ENCODE measurements at regions of chr18 and their contacts with region 1.

Region 1: GRCh38 chr18:61581578-61582201 is 248.5 kb downstream of the CDH20 start:
- DNase-seq: peak; percentile 88
- H3K4me3 ChIP-seq: peak overlapping the region; percentile 35 to 47; a peak in 3 of 4 replicates
- H3K27ac ChIP-seq: no peak overlapping the region
- H3K4me1 ChIP-seq: peaks cover 0 to 4% of the 10 kb centered on the region in 2 experiments; a peak in 2 of 4 replicates
- H3K27me3 ChIP-seq: no peaks in the 10 kb centered on the region
- CTCF ChIP-seq: peak; percentile 97
- EP300 ChIP-seq: no peak
- RAD21 ChIP-seq: peak; percentile 82

Region 2: GRCh38 chr18:61551586-61551985 is 30.1 kb before region 1 on chr18:
- CTCF ChIA-PET with region 1: interaction called, 14 read pairs
- POLR2A ChIA-PET with region 1: no interaction called
- DNase-seq: peak; percentile 74
- H3K4me3 ChIP-seq: no peak overlapping the region
- H3K27ac ChIP-seq: 0 out of 4 replicates have a peak overlapping the region, but pooled peaks of 1 of the 2 experiments have one; percentile 11
- H3K4me1 ChIP-seq: no peaks in the 10 kb centered on the region; a peak in 1 of 4 replicates
- H3K27me3 ChIP-seq: no peaks in the 10 kb centered on the region
- CTCF ChIP-seq: peak; percentile 91
- EP300 ChIP-seq: no peak
- RAD21 ChIP-seq: peak; percentile 88

Region 3: DNA sequence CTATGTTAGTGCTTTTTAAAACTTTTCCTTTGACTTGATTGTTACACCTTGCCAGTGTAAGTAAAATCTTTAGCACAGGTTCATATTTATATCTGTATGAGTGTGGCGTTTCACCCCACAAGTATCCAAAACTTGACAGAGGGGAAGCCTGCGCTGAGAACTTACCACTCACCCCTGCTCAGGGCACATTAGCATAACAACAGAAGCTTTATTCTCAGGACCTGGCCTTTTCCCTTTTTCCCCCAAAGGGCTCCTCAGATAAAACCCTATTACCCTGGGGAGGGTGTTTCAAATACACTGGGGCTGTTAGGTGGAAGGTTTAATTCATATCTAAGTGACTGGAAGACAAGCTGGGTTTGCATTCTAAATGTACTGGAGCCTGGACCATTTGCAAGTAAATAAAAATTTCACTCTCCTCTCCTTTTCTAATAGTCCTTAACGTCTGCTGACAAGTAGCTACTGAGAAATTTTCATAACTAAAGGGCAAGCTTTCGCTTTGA is 34.5 kb after region 1 on chr18:
- CTCF ChIA-PET with region 1: interaction called, 11 read pairs
- POLR2A ChIA-PET with region 1: no interaction called
- DNase-seq: no peak
- H3K4me3 ChIP-seq: no peak overlapping the region
- H3K27ac ChIP-seq: no peak overlapping the region
- H3K4me1 ChIP-seq: no peaks in the 10 kb centered on the region
- H3K27me3 ChIP-seq: no peaks in the 10 kb centered on the region
- CTCF ChIP-seq: no peak
- EP300 ChIP-seq: no peak
- RAD21 ChIP-seq: no peak

Region 4: GRCh38 chr18:61754039-61754583 is 172.4 kb after region 1 on chr18:
- CTCF ChIA-PET with region 1: no interaction called
- POLR2A ChIA-PET with region 1: no interaction called
- DNase-seq: no peak
- H3K4me3 ChIP-seq: no peak overlapping the region
- H3K27ac ChIP-seq: no peak overlapping the region
- H3K4me1 ChIP-seq: no peaks in the 10 kb centered on the region; a peak in 1 of 4 replicates
- H3K27me3 ChIP-seq: no peaks in the 10 kb centered on the region
- CTCF ChIP-seq: no peak
- EP300 ChIP-seq: no peak
- RAD21 ChIP-seq: no peak

Region 5: DNA sequence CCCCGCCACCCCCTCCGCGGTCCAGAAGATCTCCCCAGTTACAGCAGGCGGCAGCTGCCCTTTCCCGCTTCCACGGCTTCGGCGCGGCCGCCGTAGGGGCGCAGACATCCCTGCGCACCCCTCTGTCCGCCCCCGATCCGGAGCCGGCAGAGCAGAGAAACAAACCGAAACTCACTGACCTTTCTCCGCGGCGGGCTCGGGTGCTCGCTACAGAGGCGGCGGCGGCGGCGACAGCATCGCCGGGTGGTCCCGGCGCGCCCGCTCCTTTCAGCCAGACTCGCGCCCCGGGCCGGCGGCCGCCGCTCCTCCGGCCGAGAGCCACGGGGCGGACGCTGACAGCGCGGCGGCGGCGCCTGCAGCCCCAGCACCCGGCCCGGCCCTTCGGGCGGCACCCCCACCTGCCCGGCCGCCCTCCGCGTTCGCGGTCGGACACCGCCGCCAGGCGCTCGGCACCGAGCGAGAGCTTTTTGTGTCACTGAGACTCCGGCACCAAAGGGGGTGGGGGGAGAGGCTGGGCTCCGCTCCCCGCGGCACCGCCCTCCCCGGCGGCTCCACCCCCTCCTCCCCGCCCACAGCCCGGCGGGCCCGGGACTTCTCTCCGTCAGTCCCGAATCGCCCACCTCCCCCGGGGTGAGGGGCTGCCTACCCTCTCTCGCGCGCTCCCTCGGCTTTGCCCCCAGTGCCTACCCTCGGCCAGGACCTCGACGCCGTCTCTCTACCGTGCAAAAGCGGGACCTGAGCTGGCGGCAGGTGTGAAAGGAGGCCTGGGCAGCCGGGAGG is 312.5 kb after region 1 on chr18:
- CTCF ChIA-PET with region 1: interaction called, 30 read pairs
- POLR2A ChIA-PET with region 1: interaction called, 4 read pairs
- DNase-seq: peak; percentile 97
- H3K4me3 ChIP-seq: peak overlapping the region; percentile 91 to 95
- H3K27ac ChIP-seq: peak overlapping the region; percentile 27 to 85; a peak in 3 of 4 replicates
- H3K4me1 ChIP-seq: peaks cover 5 to 22% of the 10 kb centered on the region in 2 experiments; a peak in 3 of 4 replicates
- H3K27me3 ChIP-seq: no peaks in the 10 kb centered on the region
- CTCF ChIP-seq: no peak
- EP300 ChIP-seq: no peak
- RAD21 ChIP-seq: peak; percentile 70

Region 6: DNA sequence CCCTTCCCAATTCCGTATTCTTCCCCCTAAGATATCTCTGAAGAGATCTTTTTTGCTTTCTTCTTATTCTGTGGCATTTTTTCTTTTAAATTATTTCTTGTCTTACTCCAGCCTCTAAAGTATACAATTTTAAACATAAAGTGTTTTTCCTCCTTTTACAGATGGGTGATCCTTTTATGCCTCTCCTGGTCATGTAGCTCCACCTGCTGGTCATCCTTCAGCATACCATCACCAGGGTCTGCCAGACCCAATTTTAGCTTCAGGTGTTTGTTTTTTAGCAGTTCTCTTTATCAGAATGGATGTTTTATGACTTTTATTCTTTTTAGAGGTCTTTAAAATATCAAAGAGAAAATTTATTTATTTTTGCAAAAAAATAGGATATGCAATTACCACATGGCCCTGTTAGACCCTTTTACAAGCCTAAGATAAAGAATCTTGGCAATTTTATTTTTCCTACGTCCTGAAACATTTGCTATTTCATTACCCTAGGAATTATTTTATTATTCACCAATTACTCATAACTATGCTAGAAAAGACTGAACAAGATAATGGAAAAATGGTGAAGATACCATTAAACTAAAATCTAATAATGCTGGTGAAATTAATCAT is 549.7 kb after region 1 on chr18:
- CTCF ChIA-PET with region 1: interaction called, 87 read pairs
- POLR2A ChIA-PET with region 1: no interaction called
- DNase-seq: peak; percentile 50
- H3K4me3 ChIP-seq: no peak overlapping the region; a peak in 1 of 4 replicates
- H3K27ac ChIP-seq: no peak overlapping the region
- H3K4me1 ChIP-seq: peaks cover 0 to 4% of the 10 kb centered on the region in 2 experiments; a peak in 2 of 4 replicates
- H3K27me3 ChIP-seq: no peaks in the 10 kb centered on the region
- CTCF ChIP-seq: peak; percentile 99
- EP300 ChIP-seq: no peak
- RAD21 ChIP-seq: peak; percentile 99